ENCODE measurements at regions of chr12 and their contacts with region 1.

Region 1: GRCh38 chr12:125533434-125534029 is 468.3 kb downstream of the AACS start:
- DNase-seq: peak; percentile 65
- ATAC-seq: peak; percentile 47
- H3K4me3 Mint-ChIP-seq: no peak overlapping the region
- H3K27ac Mint-ChIP-seq: no peak overlapping the region
- H3K4me1 Mint-ChIP-seq: no peaks in the 10 kb centered on the region
- H3K27me3 Mint-ChIP-seq: peaks cover 7% of the 10 kb centered on the region

Region 2: GRCh38 chr12:125683748-125684381 is 150.3 kb after region 1 on chr12:
- CTCF ChIA-PET with region 1: no interaction called
- POLR2A ChIA-PET with region 1: no interaction called
- intact Hi-C with region 1: loop called (anchors 1 to 10 kb)
- DNase-seq: peak; percentile 80
- ATAC-seq: peak; percentile 80
- H3K4me3 Mint-ChIP-seq: no peak overlapping the region
- H3K27ac Mint-ChIP-seq: no peak overlapping the region
- H3K4me1 Mint-ChIP-seq: no peaks in the 10 kb centered on the region
- H3K27me3 Mint-ChIP-seq: no peaks in the 10 kb centered on the region

Region 3: GRCh38 chr12:125773033-125773640 is 239.6 kb after region 1 on chr12:
- CTCF ChIA-PET with region 1: no interaction called
- POLR2A ChIA-PET with region 1: no interaction called
- intact Hi-C with region 1: loop called (anchors 2 to 5 kb)
- DNase-seq: peak; percentile 58
- ATAC-seq: peak; percentile 49
- H3K4me3 Mint-ChIP-seq: no peak overlapping the region
- H3K27ac Mint-ChIP-seq: no peak overlapping the region
- H3K4me1 Mint-ChIP-seq: no peaks in the 10 kb centered on the region
- H3K27me3 Mint-ChIP-seq: peaks cover 6% of the 10 kb centered on the region

Region 4: DNA sequence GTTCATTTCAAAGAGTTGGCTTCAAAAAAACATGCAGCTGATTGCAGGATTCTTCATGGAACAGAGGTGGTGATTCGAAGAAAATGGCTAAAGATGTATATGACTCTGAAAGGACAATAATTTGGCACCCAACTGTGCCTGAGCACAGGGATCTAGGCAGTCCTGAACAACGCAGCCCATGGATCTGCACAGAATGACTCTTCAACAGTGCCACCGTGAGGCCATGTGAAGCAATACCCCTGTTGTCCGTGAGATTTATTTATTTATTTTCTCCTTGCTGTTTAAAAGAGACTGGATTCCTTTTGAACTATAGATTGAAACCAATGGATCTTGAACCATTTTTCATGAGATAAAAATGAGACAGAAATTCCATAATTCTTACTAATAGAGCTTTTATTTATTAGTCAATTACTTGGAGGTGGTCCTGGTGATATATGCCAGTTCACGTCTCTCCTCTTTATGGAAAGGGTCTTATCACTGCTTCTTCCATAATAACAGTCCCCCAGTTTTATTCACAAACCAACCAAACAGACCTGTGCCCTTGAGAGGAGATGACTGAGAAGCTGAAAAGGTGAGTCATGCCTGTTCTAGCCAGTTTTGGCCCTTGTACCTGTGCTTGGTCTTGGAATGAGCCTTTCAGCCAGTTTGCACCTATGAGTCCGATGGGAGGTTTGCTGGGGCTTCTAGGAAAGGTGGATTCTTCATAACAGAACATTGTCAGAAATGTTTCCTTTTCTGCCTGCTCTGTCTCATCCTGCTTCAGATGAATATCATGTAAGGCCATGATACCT is 1130.0 kb after region 1 on chr12:
- CTCF ChIA-PET with region 1: no interaction called
- POLR2A ChIA-PET with region 1: no interaction called
- intact Hi-C with region 1: loop called in 1 of 2 experiments (anchors 10 kb)
- DNase-seq: peak; percentile 56
- ATAC-seq: peak; percentile 39
- H3K4me3 Mint-ChIP-seq: no peak overlapping the region
- H3K27ac Mint-ChIP-seq: no peak overlapping the region
- H3K4me1 Mint-ChIP-seq: no peaks in the 10 kb centered on the region
- H3K27me3 Mint-ChIP-seq: peaks cover 4% of the 10 kb centered on the region

Region 5: GRCh38 chr12:126747530-126748149 is 1214.1 kb after region 1 on chr12:
- CTCF ChIA-PET with region 1: no interaction called
- POLR2A ChIA-PET with region 1: no interaction called
- intact Hi-C with region 1: loop called in 1 of 2 experiments (anchors 5 kb)
- DNase-seq: peak; percentile 80
- ATAC-seq: peak; percentile 71
- H3K4me3 Mint-ChIP-seq: no peak overlapping the region
- H3K27ac Mint-ChIP-seq: no peak overlapping the region
- H3K4me1 Mint-ChIP-seq: no peaks in the 10 kb centered on the region
- H3K27me3 Mint-ChIP-seq: peaks cover 2% of the 10 kb centered on the region

Region 6: DNA sequence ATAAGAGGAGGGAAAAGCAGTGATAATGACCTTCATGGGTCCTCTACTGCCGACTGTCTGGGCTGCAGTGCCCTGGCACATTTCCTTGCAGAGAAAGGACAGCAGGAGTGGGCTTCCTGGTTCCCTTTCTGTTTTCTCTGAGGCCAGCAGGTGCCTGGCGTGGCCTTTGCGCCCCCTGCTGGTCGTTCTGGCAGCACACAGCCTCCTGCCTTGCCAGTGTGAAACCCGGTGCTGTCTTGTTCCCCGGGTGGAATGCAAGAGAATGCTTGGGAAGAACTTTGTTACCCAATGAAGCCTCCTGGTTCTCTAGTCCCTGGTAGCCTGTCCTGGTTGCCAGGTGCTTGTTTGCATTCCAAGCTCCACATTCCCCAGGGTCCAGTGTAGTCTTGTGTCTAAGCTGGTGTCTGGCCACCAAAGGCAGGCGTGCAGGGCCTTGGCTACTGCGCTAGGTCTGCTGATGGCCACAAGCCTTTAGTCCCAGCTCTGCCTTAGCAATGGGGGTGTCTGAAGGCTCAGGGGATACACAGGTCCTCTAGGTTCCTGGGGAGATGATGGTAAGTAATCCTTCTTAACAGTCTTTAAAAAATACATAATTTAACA is 1341.0 kb after region 1 on chr12:
- CTCF ChIA-PET with region 1: no interaction called
- POLR2A ChIA-PET with region 1: no interaction called
- intact Hi-C with region 1: loop called in 1 of 2 experiments (anchors 5 kb)
- DNase-seq: peak; percentile 83
- ATAC-seq: peak; percentile 64
- H3K4me3 Mint-ChIP-seq: no peak overlapping the region
- H3K27ac Mint-ChIP-seq: no peak overlapping the region
- H3K4me1 Mint-ChIP-seq: no peaks in the 10 kb centered on the region
- H3K27me3 Mint-ChIP-seq: peaks cover 4% of the 10 kb centered on the region